AG04449 (cell line): ENCODE measurements at regions of chr22 and their contacts with region 1.

Region 1: DNA sequence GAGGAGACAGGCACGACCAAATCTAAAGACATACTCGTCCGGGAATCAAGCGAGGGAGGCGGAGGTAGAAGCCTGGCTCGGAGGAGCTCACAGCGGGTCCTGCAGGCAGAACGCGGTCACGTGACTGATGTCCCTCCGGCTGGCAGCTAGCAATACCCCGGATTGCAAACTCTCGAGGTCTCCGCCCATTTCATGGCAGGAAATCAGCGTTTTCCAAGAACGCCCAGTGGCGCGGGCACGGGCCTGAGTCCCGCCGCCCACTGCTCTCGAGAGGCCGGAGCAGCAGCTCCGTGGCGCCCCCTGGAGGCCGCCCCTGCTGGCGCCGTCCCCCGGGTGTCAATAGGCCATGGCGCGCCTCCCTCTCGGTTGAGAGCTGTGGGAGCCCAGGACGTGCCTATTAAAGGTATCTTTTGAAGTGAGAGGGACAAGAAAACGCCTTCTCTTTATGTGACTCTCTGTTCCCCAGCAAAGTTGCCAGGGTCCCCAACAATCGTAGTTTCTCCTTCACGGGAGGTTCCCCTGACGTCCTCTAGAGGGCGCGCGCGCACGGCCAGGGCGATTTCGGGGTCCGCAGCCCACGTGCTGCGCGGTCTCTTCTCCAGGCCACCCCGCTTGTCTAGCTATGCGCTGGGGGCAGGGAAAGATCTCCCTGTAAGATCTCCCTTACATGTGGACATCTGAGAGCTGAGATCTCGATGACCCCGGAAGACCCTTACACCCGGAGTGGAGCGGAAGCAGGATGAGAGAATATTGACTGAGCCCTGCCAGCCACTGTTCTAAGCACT is 37.3 kb upstream of the RBFOX2 start:
- DNase-seq: peak; percentile 73
- H3K4me3 ChIP-seq: peak overlapping the region; percentile 62
- CTCF ChIP-seq: peak; percentile 84

Region 2: GRCh38 chr22:35627264-35628041 is 438.5 kb before region 1 on chr22:
- CTCF ChIA-PET with region 1: interaction called, 15 read pairs
- POLR2A ChIA-PET with region 1: interaction called, 3 read pairs
- DNase-seq: peak; percentile 76
- H3K4me3 ChIP-seq: peak overlapping the region; percentile 66
- CTCF ChIP-seq: peak; percentile 69

Region 3: DNA sequence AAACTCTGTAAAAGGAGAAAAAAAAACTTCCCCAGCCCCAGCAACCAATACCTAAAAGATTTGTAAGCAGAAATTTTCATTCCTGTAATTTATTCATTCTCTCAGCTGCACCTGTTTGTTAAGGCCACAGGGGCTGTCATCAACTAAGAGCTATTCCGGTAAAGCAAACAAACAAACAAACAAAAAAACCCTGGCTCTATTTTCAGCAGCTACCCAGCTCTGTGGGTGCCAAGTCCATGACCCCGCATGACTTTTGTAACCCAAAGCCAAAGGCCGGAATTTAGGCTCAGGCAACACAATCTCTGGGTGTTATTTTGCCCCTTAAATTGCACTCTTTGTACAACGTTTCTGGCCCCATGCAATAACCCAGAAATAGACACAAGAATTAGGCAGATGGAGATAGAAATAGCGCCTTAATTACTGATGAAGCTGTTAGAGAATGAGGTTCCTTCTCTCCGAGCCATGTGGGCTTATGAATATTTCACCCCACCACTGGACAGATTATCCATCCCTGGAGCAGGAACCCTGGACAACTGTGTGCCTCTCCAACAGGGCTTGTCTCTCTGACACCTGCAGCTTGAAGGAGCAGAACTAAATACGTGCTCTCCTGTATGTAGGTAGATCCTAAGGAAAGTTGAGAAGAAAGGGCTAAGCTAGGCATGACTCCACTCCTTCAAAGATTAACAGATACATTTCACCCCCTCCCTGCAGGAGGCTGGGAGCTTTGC is 388.3 kb before region 1 on chr22:
- CTCF ChIA-PET with region 1: no interaction called
- POLR2A ChIA-PET with region 1: no interaction called
- DNase-seq: no peak
- H3K4me3 ChIP-seq: no peak overlapping the region
- CTCF ChIP-seq: no peak

Region 4: GRCh38 chr22:35914665-35915476 is 151.1 kb before region 1 on chr22:
- CTCF ChIA-PET with region 1: interaction called, 39 read pairs
- POLR2A ChIA-PET with region 1: no interaction called
- DNase-seq: no peak
- H3K4me3 ChIP-seq: peak overlapping the region; percentile 58
- CTCF ChIP-seq: no peak

Region 5: DNA sequence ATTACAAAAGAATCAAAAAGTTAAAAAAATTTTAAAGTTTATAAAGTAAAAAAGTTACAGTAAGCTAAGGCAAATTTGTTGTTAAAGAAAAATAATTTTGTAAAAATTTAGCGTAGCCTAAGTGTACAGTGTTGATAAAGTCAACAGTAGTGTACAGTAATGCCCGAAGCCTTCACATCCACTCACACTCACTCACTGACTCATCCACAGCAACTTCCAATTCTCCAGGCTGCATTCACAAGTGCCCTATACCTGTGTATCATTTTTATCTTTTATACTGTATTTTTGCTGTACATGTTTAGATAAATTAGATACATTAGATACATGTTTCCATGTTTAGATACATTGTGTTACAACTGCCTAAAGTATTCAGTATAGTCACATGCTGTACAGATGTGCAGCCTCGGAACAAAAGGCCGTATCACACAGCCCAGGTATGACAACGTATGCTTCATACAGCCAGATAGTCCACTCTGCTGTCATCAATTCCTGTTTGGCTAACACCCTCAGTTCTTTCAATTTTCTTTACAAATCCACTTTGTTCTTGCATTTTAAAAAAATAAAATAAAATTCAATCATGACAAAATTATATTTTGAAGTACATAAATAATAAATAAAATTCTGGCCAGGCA is 118.1 kb before region 1 on chr22:
- CTCF ChIA-PET with region 1: interaction called, 22 read pairs
- POLR2A ChIA-PET with region 1: no interaction called
- DNase-seq: no peak
- H3K4me3 ChIP-seq: no peak overlapping the region
- CTCF ChIP-seq: no peak

Region 6: GRCh38 chr22:35987487-35987886 is 78.5 kb before region 1 on chr22:
- CTCF ChIA-PET with region 1: interaction called, 21 read pairs
- POLR2A ChIA-PET with region 1: no interaction called
- DNase-seq: no peak
- H3K4me3 ChIP-seq: no peak overlapping the region
- CTCF ChIP-seq: no peak

Region 7: DNA sequence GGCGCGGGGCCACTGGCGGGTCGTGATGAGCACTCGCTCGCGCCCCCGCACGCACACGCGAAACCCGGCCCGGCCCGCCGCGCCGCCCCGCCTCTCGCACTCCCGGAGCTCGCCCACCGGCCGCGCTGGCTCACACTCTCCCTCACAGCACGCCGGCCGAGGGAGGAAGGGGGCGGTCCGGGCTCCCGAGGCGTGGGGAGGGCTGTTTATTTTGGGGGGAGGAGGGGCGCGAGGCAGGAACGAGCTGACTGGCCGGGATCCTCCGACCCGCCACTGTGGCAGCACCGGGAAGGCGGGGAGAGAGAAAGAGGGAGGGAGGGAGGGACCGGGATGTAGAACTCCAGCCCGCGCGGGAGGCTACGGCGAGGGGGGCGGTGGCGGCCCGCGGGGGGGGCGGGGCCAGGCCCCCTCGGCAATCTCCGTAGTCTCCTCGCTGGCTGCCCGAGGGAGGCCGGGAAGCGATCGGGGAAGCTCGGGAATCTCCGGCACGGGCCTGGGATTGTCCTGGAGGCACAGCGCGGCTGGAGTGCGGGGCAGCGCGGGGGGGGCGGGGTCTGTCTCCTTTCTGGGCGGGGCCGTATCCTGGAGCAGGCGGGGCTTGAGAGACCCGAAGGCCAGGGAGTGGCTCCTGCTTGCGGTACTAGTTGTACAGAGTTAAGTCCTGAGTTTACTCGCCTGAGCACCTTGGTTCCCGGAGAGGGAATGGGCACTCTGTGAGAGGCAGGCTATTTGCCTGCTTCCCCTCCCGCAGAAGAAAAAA is 37.1 kb before region 1 on chr22 and contains the start of gene RBFOX2:
- CTCF ChIA-PET with region 1: interaction called, 22 read pairs
- POLR2A ChIA-PET with region 1: interaction called, 14 read pairs
- DNase-seq: peak; percentile 74
- H3K4me3 ChIP-seq: peak within 1 kb of the TSS; percentile 89
- CTCF ChIP-seq: no peak

Region 8: DNA sequence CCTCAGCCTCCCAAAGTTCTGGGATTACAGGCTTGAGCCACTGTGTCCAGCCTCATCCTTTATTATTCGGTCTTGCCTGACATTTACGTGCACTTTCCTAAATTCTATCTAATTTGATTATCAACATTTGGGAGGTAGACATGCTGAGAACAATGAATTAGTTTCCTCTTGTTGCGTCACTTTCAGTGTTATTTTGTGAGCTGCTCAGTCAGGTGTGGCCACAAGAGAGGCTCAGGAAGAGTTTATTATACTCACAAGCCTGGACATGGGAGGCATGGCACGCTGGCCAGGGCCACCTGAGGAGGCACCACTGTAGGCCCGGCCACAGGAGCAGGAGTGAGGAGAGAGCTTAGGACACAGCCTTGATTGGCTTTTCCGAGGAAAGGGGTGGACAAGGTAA is 22.3 kb after region 1 on chr22:
- CTCF ChIA-PET with region 1: interaction called, 74 read pairs
- POLR2A ChIA-PET with region 1: no interaction called
- DNase-seq: no peak
- H3K4me3 ChIP-seq: no peak overlapping the region
- CTCF ChIP-seq: no peak